ENCODE measurements at regions of chr12 and their contacts with region 1.

Region 1: GRCh38 chr12:49967042-49967776 is 5.5 kb downstream of the AQP5 start:
- DNase-seq: no peak
- H3K4me3 ChIP-seq: peak overlapping the region; percentile 56
- CTCF ChIP-seq: peak; percentile 96

Region 2: GRCh38 chr12:49687941-49688340 is 279.3 kb before region 1 on chr12:
- CTCF ChIA-PET with region 1: no interaction called
- POLR2A ChIA-PET with region 1: no interaction called
- DNase-seq: no peak
- H3K4me3 ChIP-seq: no peak overlapping the region
- CTCF ChIP-seq: no peak

Region 3: GRCh38 chr12:49776413-49776812 is 190.8 kb before region 1 on chr12:
- CTCF ChIA-PET with region 1: interaction called, 14 read pairs
- POLR2A ChIA-PET with region 1: no interaction called
- DNase-seq: no peak
- H3K4me3 ChIP-seq: no peak overlapping the region
- CTCF ChIP-seq: peak; percentile 83

Region 4: GRCh38 chr12:49945394-49946080 is 21.7 kb before region 1 on chr12:
- CTCF ChIA-PET with region 1: interaction called, 122 read pairs
- POLR2A ChIA-PET with region 1: no interaction called
- DNase-seq: peak; percentile 12
- H3K4me3 ChIP-seq: peak overlapping the region; percentile 28
- CTCF ChIP-seq: peak; percentile 96

Region 5: GRCh38 chr12:50016501-50017475 is 49.6 kb after region 1 on chr12:
- CTCF ChIA-PET with region 1: interaction called, 69 read pairs
- POLR2A ChIA-PET with region 1: no interaction called
- DNase-seq: no peak
- H3K4me3 ChIP-seq: no peak overlapping the region
- CTCF ChIP-seq: no peak

Region 6: DNA sequence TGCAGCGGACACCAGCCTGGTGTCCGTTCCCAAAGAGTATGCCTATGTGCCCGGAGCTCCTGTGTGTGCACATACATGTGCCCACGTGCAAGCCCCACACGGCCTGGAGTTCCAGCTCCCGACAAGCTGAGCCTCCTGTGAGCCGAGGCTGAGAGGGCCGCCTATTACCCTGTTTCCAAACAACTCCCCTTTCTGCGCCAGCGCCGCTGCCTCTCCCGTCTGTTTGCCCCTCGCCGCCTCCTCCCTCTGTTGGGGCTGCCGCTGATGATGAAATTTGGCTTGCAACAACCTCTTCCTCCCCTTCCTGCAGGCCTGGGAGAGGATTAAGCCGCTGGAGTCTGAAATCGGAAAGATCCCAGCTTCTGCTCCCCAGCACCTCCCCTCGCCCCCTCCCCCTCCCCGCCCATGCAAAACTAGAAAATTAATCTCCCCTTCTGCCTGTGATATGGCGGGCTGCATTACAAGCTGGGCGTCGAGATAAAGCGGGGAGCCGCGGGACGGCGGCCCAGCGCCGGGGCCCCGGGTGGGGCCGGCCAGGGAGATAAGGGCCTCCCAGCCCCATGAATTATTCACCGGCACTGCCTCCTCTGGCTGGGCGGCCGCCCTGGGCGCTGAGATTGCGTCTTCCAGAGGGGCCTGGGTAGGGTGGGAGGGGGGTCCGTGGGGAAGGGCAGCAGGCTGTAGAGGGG is 83.3 kb after region 1 on chr12:
- CTCF ChIA-PET with region 1: interaction called, 274 read pairs
- POLR2A ChIA-PET with region 1: no interaction called
- DNase-seq: no peak
- H3K4me3 ChIP-seq: peak overlapping the region; percentile 16; the same call in 1 of the 2 replicates
- CTCF ChIP-seq: no peak

Region 7: GRCh38 chr12:50111693-50112455 is 144.7 kb after region 1 on chr12 and contains the start of gene COX14:
- CTCF ChIA-PET with region 1: interaction called, 27 read pairs
- POLR2A ChIA-PET with region 1: no interaction called
- DNase-seq: peak; percentile 97
- H3K4me3 ChIP-seq: peak within 1 kb of the TSS; percentile 98
- CTCF ChIP-seq: peak; percentile 96